ENCODE measurements at regions of chr1 and their contacts with region 1.

Region 1: DNA sequence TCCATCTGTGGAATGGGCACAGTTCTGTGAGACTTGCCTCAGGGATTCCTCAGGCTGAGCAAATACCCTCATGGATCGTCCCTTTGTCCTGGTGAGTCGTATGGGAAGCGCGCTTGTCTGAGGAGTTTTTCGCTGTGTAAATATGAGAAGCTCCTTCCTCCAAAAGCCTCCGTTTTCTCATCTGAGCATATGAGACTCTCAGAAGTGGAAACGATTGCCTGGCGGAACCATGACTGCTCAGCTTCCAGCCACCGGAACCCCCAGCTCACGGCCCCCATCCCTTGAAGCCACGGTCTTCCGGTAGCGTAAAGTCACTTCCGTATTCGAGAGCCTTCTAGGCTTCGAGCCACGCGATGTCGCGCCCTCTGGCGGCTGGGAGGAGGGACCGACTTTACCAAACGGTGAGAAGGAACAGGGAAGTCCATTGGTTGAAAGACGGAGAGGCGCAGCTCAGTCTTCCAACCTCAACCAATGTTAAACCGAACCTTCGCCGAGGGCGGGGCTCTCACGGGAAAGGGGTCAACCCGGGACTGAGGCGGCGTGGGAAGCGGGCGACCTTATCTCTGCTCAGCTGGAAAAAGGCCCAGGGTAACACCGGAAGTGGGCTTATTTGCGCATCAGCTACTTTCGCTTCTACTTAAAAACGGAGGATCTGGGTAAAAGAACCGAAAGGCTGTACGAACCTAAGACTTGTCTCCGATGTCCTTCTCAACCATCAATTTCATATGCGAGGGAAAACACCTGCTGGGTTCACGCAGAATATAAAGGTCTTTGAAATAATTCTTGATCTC is 46.2 kb downstream of the AZIN2 start:
- DNase-seq: peak; percentile 100
- ATAC-seq: peak; percentile 98
- H3K4me3 Mint-ChIP-seq: peak overlapping the region; percentile 95
- H3K27ac Mint-ChIP-seq: peak overlapping the region; percentile 96
- H3K4me1 Mint-ChIP-seq: peaks cover 49% of the 10 kb centered on the region
- H3K27me3 Mint-ChIP-seq: no peaks in the 10 kb centered on the region

Region 2: DNA sequence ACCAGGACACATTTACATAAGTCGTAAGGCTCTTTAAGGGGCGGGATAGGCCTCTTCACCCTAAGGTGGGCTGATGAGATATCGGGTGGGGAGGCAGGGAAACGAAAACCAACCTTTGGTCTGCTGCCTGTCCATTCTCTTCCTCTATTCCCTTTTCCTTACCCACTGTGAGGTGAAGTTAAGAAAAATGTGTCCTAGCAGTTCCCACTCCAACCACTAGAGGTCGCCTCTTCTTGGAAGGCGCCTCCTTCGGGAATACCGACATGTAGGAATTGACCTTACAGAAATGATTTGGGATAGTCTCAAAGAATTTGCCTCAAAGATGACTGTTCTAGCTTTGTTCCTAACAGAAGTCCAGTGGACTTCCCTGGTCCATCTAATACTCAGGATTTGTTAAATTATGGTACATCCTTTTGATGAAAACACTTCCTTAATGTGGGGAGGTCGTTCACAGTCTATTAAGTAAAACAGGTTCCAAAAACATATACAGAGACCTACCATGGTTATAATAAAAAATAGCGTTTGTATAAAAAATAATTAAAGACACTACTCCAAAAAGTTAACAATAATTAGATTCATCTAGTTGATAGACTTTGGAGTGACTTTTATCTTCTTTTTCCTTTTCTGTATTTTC is 32.1 kb before region 1 on chr1:
- CTCF ChIA-PET with region 1: interaction called, 79 read pairs
- POLR2A ChIA-PET with region 1: interaction called, 12 read pairs
- DNase-seq: no peak
- ATAC-seq: no peak
- H3K4me3 Mint-ChIP-seq: no peak overlapping the region
- H3K27ac Mint-ChIP-seq: no peak overlapping the region
- H3K4me1 Mint-ChIP-seq: peaks cover 85% of the 10 kb centered on the region
- H3K27me3 Mint-ChIP-seq: no peaks in the 10 kb centered on the region

Region 3: GRCh38 chr1:33137800-33138199 is 10.6 kb after region 1 on chr1:
- CTCF ChIA-PET with region 1: interaction called, 24 read pairs
- POLR2A ChIA-PET with region 1: interaction called, 8 read pairs
- DNase-seq: peak; percentile 61
- ATAC-seq: peak; percentile 67
- H3K4me3 Mint-ChIP-seq: no peak overlapping the region
- H3K27ac Mint-ChIP-seq: no peak overlapping the region
- H3K4me1 Mint-ChIP-seq: peaks cover 22% of the 10 kb centered on the region
- H3K27me3 Mint-ChIP-seq: no peaks in the 10 kb centered on the region

Region 4: DNA sequence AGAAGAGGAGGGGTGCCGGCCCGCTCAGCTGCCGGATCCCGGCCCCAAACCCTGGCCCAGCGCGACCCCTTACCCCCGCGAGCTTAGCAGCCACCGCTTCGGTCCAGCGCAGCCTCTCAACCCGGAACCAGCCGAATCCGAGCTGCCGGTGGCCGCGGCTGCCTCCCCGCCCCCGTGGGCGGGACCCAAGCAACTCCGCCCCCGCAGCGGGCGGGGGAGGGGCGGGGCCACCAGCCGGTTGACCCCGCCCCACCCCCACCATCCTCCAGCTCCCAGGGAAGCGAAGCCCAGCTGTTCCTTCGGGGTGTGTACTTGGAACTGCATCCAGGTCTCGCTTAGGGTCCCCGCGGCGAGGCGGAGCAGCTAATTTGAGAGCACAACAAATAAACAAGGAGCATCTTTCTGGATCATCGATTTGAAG is 54.7 kb after region 1 on chr1 and contains the start of gene TRIM62:
- CTCF ChIA-PET with region 1: interaction called, 14 read pairs
- POLR2A ChIA-PET with region 1: interaction called, 6 read pairs
- DNase-seq: peak; percentile 78
- ATAC-seq: peak; percentile 71
- H3K4me3 Mint-ChIP-seq: peak within 1 kb of the TSS; percentile 83
- H3K27ac Mint-ChIP-seq: peak within 1 kb of the TSS; percentile 83
- H3K4me1 Mint-ChIP-seq: peaks cover 16% of the 10 kb centered on the region
- H3K27me3 Mint-ChIP-seq: peaks cover 27% of the 10 kb centered on the region
- total RNA-seq, gene TRIM62: 9.7 to 10.0 TPM